ENCODE measurements at regions of chr17 and their contacts with region 1.

Region 1: GRCh38 chr17:74748529-74749365 is at the start of gene NHERF1:
- DNase-seq: peak; percentile 94
- ATAC-seq: peak; percentile 89
- H3K4me3 Mint-ChIP-seq: peak within 1 kb of the TSS; percentile 85
- H3K27ac Mint-ChIP-seq: peak within 1 kb of the TSS; percentile 86
- H3K4me1 Mint-ChIP-seq: peaks cover 49% of the 10 kb centered on the region
- H3K27me3 Mint-ChIP-seq: no peaks in the 10 kb centered on the region
- CTCF ChIP-seq: peak; percentile 30
- total RNA-seq, gene NHERF1: 143 to 150 TPM

Region 2: DNA sequence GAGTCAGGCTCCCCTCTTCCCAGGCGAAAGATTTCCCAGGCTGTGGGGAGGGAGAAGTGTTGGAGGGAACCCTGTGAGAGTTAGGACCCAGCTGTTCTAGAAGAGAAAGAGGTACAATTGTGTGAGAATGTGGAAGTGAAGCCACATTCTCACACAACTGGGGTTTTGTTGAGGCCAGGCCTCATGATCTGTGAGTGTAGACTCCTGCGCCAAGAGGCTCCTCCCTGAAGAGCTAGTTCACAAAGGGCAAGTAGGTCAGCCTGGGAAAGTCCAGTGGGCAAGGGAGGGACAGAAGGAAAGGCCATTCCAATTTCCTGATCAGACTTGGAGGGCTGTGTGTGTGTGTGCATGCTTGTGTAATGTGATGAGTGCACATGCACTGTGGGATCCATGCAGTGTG is 51.2 kb before region 1 on chr17:
- CTCF ChIA-PET with region 1: no interaction called
- POLR2A ChIA-PET with region 1: no interaction called
- intact Hi-C with region 1: no loop called
- DNase-seq: no peak
- ATAC-seq: no peak
- H3K4me3 Mint-ChIP-seq: no peak overlapping the region
- H3K27ac Mint-ChIP-seq: no peak overlapping the region
- H3K4me1 Mint-ChIP-seq: no peaks in the 10 kb centered on the region
- H3K27me3 Mint-ChIP-seq: no peaks in the 10 kb centered on the region
- CTCF ChIP-seq: no peak

Region 3: GRCh38 chr17:74715144-74715543 is 33.6 kb before region 1 on chr17:
- CTCF ChIA-PET with region 1: no interaction called
- POLR2A ChIA-PET with region 1: no interaction called
- intact Hi-C with region 1: no loop called
- DNase-seq: no peak
- ATAC-seq: no peak
- H3K4me3 Mint-ChIP-seq: no peak overlapping the region
- H3K27ac Mint-ChIP-seq: no peak overlapping the region
- H3K4me1 Mint-ChIP-seq: peaks cover 9% of the 10 kb centered on the region
- H3K27me3 Mint-ChIP-seq: peaks cover 10% of the 10 kb centered on the region
- CTCF ChIP-seq: no peak

Region 4: GRCh38 chr17:74759243-74759801 is 10.6 kb after region 1 on chr17:
- CTCF ChIA-PET with region 1: interaction called, 98 read pairs
- POLR2A ChIA-PET with region 1: interaction called, 19 read pairs
- intact Hi-C with region 1: no loop called
- DNase-seq: peak; percentile 75
- ATAC-seq: peak; percentile 82
- H3K4me3 Mint-ChIP-seq: peak overlapping the region; percentile 51
- H3K27ac Mint-ChIP-seq: peak overlapping the region; percentile 81
- H3K4me1 Mint-ChIP-seq: peaks cover 68% of the 10 kb centered on the region
- H3K27me3 Mint-ChIP-seq: no peaks in the 10 kb centered on the region
- CTCF ChIP-seq: no peak

Region 5: GRCh38 chr17:74770498-74771318 is 22.0 kb after region 1 on chr17:
- CTCF ChIA-PET with region 1: interaction called, 110 read pairs
- POLR2A ChIA-PET with region 1: interaction called, 11 read pairs
- intact Hi-C with region 1: no loop called
- DNase-seq: peak; percentile 78
- ATAC-seq: peak; percentile 88
- H3K4me3 Mint-ChIP-seq: no peak overlapping the region
- H3K27ac Mint-ChIP-seq: peak overlapping the region; percentile 72
- H3K4me1 Mint-ChIP-seq: peaks cover 30% of the 10 kb centered on the region
- H3K27me3 Mint-ChIP-seq: no peaks in the 10 kb centered on the region
- CTCF ChIP-seq: peak; percentile 76

Region 6: GRCh38 chr17:74776044-74776977 is 27.6 kb after region 1 on chr17 and contains the start of gene NAT9:
- CTCF ChIA-PET with region 1: interaction called, 110 read pairs
- POLR2A ChIA-PET with region 1: interaction called, 21 read pairs
- intact Hi-C with region 1: loop called (anchors 2 kb)
- DNase-seq: peak; percentile 98
- ATAC-seq: peak; percentile 75
- H3K4me3 Mint-ChIP-seq: peak within 1 kb of the TSS; percentile 100
- H3K27ac Mint-ChIP-seq: peak within 1 kb of the TSS; percentile 96
- H3K4me1 Mint-ChIP-seq: peaks cover 57% of the 10 kb centered on the region
- H3K27me3 Mint-ChIP-seq: no peaks in the 10 kb centered on the region
- CTCF ChIP-seq: no peak
- total RNA-seq, gene NAT9: 35.5 to 42.4 TPM

Region 7: GRCh38 chr17:74785096-74785980 is 36.6 kb after region 1 on chr17:
- CTCF ChIA-PET with region 1: interaction called, 67 read pairs
- POLR2A ChIA-PET with region 1: interaction called, 21 read pairs
- intact Hi-C with region 1: loop called (anchors 2 kb)
- DNase-seq: peak; percentile 65
- ATAC-seq: peak; percentile 68
- H3K4me3 Mint-ChIP-seq: no peak overlapping the region
- H3K27ac Mint-ChIP-seq: peak overlapping the region; percentile 47
- H3K4me1 Mint-ChIP-seq: peaks cover 54% of the 10 kb centered on the region
- H3K27me3 Mint-ChIP-seq: no peaks in the 10 kb centered on the region
- CTCF ChIP-seq: no peak

Region 8: DNA sequence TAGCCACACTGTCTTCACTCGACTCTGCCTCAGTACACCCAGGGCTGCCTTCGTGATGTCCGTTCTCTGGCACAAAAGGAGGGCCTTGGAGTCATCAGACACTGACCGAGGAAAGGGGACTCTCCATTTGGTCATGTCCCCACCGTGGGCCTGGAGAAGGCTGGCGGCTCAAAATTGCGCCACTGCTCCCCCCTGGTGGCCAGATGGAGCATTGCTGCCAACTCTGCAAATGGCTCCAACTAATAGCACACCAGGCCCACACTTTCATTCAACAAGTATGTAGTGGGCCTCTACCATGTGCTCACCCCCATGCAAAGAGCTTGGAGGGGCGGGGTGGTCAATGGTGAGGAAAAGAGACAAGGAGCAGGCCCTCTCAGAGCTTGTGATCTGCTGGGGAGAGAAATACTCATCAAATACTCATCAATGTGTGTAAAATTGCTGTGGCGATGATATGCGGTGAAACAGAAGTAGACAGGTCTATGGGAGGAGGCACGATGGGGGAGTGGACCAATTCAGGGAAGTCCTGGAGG is 116.2 kb after region 1 on chr17:
- CTCF ChIA-PET with region 1: interaction called, 69 read pairs
- POLR2A ChIA-PET with region 1: interaction called, 3 read pairs
- intact Hi-C with region 1: loop called (anchors 5 kb)
- DNase-seq: peak; percentile 83
- ATAC-seq: peak; percentile 75
- H3K4me3 Mint-ChIP-seq: no peak overlapping the region
- H3K27ac Mint-ChIP-seq: no peak overlapping the region
- H3K4me1 Mint-ChIP-seq: peaks cover 18% of the 10 kb centered on the region
- H3K27me3 Mint-ChIP-seq: peaks cover 17% of the 10 kb centered on the region
- CTCF ChIP-seq: peak; percentile 90

Region 9: DNA sequence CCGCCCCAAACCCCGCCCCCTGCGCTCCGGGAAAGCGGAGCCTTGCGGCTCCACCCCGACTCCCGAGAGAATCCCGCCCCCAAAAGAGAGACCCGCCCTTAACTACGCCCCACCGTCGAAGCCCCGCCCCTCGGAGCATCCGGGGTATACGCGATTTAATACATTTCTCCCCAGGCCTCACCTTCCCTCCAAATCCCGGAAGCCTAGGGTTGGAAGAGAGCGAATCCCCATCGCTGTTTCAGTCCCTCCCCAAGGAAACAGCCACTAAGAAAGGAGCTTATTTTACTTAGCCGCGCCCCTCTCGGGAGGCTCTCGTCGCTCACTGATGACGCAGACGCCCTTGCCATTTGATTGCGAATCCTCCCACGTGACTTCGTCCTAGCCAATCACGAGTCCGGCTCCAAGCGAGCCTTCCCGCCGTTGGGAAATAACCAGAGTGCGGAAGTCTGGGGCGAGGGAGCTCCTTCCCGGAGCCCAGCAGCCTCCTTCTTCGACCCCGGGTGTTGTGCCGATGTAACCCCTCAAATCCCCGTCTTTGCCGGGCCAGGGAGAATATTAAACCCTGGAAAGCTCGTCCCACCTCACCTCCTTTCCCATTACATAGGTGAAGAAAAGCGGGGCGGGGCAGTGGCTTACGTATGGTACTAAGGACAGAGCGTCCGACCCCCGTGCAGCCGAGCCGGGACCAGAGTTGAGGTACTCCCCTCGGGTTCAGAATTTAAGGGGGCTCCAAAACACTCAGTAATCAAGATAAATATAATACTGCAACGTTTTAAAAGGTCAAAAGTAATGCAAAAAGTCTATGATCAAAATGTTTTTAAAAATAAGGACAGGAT is 124.5 kb after region 1 on chr17:
- CTCF ChIA-PET with region 1: interaction called, 4 read pairs
- POLR2A ChIA-PET with region 1: interaction called, 11 read pairs
- intact Hi-C with region 1: no loop called
- DNase-seq: peak; percentile 100
- ATAC-seq: peak; percentile 95
- H3K4me3 Mint-ChIP-seq: peak overlapping the region; percentile 75
- H3K27ac Mint-ChIP-seq: peak overlapping the region; percentile 94
- H3K4me1 Mint-ChIP-seq: peaks cover 15% of the 10 kb centered on the region
- H3K27me3 Mint-ChIP-seq: no peaks in the 10 kb centered on the region
- CTCF ChIP-seq: no peak